ENCODE measurements at regions of chr15 and their contacts with region 1.

Region 1: GRCh38 chr15:81265944-81266775 is 57.8 kb downstream of the STARD5 start:
- DNase-seq: peak; percentile 90 to 92 (median 90)
- ATAC-seq: peak; percentile 98
- H3K4me3 ChIP-seq: no peak overlapping the region
- H3K27ac ChIP-seq: peak overlapping the region; percentile 63
- H3K4me1 ChIP-seq: peaks cover 2 to 13% of the 10 kb centered on the region in 2 experiments; a peak in 3 of 5 replicates
- H3K27me3 ChIP-seq: no peaks in the 10 kb centered on the region
- CTCF ChIP-seq: peak; percentile 91 to 96 (median 91)
- EP300 ChIP-seq: 0 out of 2 replicates have a peak, but pooled peaks have one; percentile 28
- POLR2A ChIP-seq: 0 out of 2 replicates have a peak, but pooled peaks have one; percentile 36
- RAD21 ChIP-seq: peak; percentile 92 to 95

Region 2: DNA sequence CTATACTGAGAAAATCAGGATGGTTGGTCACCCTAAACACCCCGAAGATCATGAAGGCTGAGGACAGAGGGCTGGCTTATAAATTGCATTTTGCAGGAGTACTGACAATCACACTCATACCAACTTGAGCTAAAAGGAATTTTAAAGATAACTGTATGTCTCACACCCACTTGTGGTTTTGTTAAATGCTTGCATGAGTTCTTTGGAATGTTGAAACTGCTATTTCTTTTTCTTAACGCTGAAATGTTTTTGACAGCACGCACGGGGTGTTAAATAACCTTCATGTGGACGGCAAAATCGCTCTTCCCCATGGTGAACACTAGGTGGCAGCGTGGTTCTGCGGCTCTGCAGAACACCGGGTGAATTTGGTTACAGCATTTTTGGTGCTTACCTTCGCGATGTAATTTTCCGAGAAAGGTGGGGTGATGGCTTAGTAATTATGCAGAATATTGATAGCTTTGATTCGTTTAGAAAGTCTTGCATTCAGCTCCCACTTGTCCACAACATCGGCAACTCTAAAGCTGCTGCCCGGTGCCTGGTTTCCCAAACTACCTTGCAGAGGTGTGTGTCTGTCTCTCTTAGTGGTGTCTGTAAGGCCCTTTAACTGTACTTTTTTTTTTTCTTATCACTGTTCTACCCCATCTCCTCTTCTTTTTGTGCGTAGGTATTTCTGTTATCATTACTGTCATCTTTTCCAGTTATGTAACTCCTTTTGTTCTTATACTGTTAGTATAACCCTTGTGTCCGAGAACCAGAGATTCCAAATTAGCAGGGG is 810.3 kb before region 1 on chr15:
- CTCF ChIA-PET with region 1: interaction called, 9 read pairs
- POLR2A ChIA-PET with region 1: no interaction called
- in situ Hi-C with region 1: loop called (anchors 10 kb)
- intact Hi-C with region 1: loop called (anchors 5 kb)
- DNase-seq: peak; percentile 69 to 71 (median 71)
- ATAC-seq: peak; percentile 87
- H3K4me3 ChIP-seq: no peak overlapping the region
- H3K27ac ChIP-seq: no peak overlapping the region
- H3K4me1 ChIP-seq: no peaks in the 10 kb centered on the region
- H3K27me3 ChIP-seq: peaks cover 0 to 25% of the 10 kb centered on the region in 2 experiments; a peak in 2 of 5 replicates
- CTCF ChIP-seq: peak; percentile 86 to 95 (median 92)
- EP300 ChIP-seq: no peak
- POLR2A ChIP-seq: no peak
- RAD21 ChIP-seq: peak; percentile 82 to 86

Region 3: DNA sequence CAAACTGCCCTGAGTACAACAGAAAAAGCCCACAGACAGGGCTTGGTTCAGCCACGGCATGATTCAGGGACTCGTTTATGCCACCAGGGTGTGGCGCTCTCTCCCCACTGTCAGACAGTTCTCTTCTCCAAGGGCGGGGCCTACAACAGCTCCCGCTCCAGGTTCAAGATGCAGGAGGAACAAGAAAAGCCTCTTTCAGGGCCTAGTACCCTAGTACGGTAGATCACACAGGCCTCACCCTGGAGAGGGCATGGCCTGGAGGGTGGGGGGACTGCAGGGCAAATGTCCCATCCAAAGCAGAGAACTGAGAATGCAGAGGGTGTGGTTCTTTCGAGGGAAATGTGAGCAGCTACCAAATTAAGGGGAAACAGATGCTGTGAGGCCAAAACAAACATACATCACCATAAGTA is 288.5 kb before region 1 on chr15:
- CTCF ChIA-PET with region 1: interaction called, 115 read pairs
- POLR2A ChIA-PET with region 1: interaction called, 15 read pairs
- in situ Hi-C with region 1: loop called (anchors 5 kb)
- intact Hi-C with region 1: loop called (anchors 1 kb)
- DNase-seq: peak; percentile 77 to 87 (median 80)
- ATAC-seq: peak; percentile 99
- H3K4me3 ChIP-seq: no peak overlapping the region
- H3K27ac ChIP-seq: no peak overlapping the region
- H3K4me1 ChIP-seq: peaks cover 0 to 3% of the 10 kb centered on the region in 2 experiments; a peak in 2 of 5 replicates
- H3K27me3 ChIP-seq: no peaks in the 10 kb centered on the region
- CTCF ChIP-seq: peak; percentile 92 to 95 (median 92)
- EP300 ChIP-seq: no peak
- POLR2A ChIP-seq: no peak
- RAD21 ChIP-seq: peak; percentile 88 to 94

Region 4: DNA sequence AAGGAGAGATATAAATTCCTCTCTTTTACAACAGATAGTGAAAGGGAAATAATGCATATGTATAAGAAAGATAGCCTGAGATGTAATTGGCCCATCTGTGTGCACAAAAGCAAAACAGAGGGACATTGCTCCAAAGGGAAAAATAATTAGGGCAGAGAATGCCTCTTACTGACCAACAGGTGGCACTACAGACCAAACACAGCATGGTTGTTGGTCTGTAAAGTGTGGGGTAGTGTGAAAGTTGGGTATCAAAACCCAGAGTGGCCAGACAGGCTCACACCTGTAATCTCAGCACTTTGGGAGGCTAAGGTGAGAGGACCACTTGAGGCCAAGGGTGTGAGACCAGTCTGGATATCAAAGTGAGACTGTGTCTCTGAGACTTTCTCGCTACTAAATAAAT is 269.9 kb before region 1 on chr15:
- CTCF ChIA-PET with region 1: interaction called, 5 read pairs
- POLR2A ChIA-PET with region 1: interaction called, 5 read pairs
- in situ Hi-C with region 1: no loop called
- intact Hi-C with region 1: loop called (anchors 1 kb)
- DNase-seq: peak; percentile 27 to 67 (median 36)
- ATAC-seq: no peak
- H3K4me3 ChIP-seq: no peak overlapping the region
- H3K27ac ChIP-seq: no peak overlapping the region
- H3K4me1 ChIP-seq: peaks cover 11 to 19% of the 10 kb centered on the region in 2 experiments
- H3K27me3 ChIP-seq: no peaks in the 10 kb centered on the region
- CTCF ChIP-seq: peak; percentile 65 to 76 (median 75)
- EP300 ChIP-seq: no peak
- POLR2A ChIP-seq: no peak
- RAD21 ChIP-seq: peak; percentile 40 to 84; a peak in 3 of 4 replicates

Region 5: GRCh38 chr15:81239190-81239589 is 27.0 kb before region 1 on chr15:
- CTCF ChIA-PET with region 1: no interaction called
- POLR2A ChIA-PET with region 1: no interaction called
- in situ Hi-C with region 1: no loop called
- intact Hi-C with region 1: no loop called
- DNase-seq: no peak
- ATAC-seq: no peak
- H3K4me3 ChIP-seq: no peak overlapping the region
- H3K27ac ChIP-seq: no peak overlapping the region
- H3K4me1 ChIP-seq: no peaks in the 10 kb centered on the region; a peak in 2 of 5 replicates
- H3K27me3 ChIP-seq: no peaks in the 10 kb centered on the region
- CTCF ChIP-seq: no peak
- EP300 ChIP-seq: no peak
- POLR2A ChIP-seq: no peak
- RAD21 ChIP-seq: no peak

Measured in K562 (cell line).